ENCODE measurements at regions of chr11 and their contacts with region 1.

Region 1: GRCh38 chr11:86473991-86474833 is 99.5 kb downstream of the CCDC81 start:
- DNase-seq: peak; percentile 87

Region 2: DNA sequence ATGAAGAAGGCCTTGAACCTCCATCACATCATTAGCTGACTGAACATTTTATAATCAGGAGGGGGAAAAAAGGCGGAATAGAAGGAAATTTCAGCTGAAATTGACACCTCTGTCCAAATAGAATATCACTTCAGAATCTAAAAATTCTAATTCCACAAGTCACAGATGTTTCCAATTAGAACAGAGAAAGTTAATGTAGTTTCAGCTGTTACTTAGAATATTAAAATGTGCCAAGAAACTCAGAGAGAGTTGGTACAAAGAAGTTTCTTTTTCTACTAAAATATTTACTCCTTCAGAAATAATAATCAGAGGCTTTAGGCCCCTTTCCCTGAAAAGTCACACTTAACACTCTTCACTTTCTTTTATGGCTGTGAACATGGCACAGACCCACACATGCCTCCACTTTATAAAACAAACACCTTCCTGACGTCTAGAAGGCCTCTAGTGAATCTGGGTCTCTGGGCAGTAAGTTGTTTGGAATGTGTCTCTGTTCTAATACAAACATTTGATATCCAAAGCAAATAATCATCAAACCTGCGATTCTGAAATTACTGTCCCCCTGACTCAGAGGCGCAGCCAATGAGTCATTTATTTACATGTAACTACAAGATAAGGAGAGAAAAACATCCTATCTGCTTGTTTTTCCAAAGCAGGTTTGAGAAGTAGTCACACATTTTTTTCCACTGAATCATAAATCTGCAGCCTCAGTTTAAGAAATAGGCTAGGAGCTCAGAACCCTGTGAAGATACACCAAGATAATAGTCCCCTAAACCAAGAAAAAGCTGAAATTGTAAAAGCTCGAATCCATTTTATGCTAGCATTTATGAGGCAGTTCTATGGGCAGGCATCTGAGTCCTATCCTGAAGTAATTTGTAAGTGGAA is 49.8 kb after region 1 on chr11:
- intact Hi-C with region 1: loop called (anchors 5 kb)
- DNase-seq: no peak

Region 3: GRCh38 chr11:86588566-86589090 is 114.4 kb after region 1 on chr11:
- intact Hi-C with region 1: loop called (anchors 5 kb)
- DNase-seq: no peak